MCF 10A (cell line): ENCODE measurements at regions of chr22 and their contacts with region 1.

Region 1: GRCh38 chr22:37199103-37199759 is 11.2 kb upstream of the C1QTNF6 start:
- DNase-seq: peak; percentile 97
- H3K4me3 Mint-ChIP-seq: peak overlapping the region; percentile 81
- H3K27ac Mint-ChIP-seq: peak overlapping the region; percentile 35
- H3K4me1 Mint-ChIP-seq: peaks cover 25% of the 10 kb centered on the region
- H3K27me3 Mint-ChIP-seq: no peaks in the 10 kb centered on the region
- CTCF ChIP-seq: peak; percentile 87

Region 2: GRCh38 chr22:36409911-36410756 is 789.1 kb before region 1 on chr22:
- CTCF ChIA-PET with region 1: no interaction called
- POLR2A ChIA-PET with region 1: no interaction called
- intact Hi-C with region 1: no loop called
- DNase-seq: peak; percentile 97
- H3K4me3 Mint-ChIP-seq: peak overlapping the region; percentile 78
- H3K27ac Mint-ChIP-seq: peak overlapping the region; percentile 85
- H3K4me1 Mint-ChIP-seq: peaks cover 26% of the 10 kb centered on the region
- H3K27me3 Mint-ChIP-seq: no peaks in the 10 kb centered on the region
- CTCF ChIP-seq: no peak

Region 3: DNA sequence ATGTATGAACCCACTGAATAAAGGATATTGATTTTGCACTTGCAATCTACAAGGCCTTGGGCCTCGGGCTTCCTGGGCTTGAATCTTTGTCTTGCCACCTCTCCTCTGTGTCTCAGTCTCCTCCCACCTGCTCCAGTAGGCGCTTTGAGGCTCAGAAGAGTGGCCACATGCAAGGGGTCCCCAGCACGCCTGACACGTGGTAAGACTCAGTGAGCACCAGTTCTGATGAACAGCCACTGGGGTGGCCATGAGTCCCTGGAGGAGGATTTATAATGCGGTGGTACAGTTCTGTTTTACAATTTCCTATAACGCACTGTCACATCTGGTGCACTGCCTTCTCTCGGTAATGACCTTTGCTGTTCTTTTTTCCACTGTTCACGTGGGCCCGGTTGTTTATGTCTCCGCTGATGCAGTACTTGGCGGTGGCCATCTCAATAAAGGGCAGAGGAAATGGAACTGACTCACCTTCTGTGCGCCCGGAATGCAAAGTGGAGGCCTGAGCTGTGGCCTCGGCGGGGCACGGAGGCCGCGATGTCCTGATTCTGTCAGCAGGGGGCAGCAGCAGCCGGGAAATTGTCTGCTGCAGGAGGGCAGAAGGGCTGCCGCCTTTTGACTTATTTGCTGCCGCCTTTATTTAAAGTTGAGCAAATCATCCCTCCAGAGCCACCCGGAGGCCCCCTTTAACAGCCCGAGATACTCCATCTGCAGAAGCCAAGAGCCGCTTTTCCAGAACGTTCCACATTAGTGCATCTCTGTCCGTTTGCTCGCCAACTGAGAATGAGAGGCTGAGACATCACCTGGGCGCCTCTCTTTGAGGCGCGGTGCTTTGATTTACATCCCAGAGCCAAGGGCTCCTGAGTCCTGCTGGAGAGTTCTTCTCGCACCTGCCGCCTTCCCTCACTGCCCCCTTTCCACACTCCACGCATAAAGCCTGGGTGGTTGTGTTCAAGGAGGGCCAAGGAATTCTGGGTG is 417.3 kb before region 1 on chr22:
- CTCF ChIA-PET with region 1: interaction called, 4 read pairs
- POLR2A ChIA-PET with region 1: interaction called, 3 read pairs
- intact Hi-C with region 1: loop called (anchors 5 kb)
- DNase-seq: peak; percentile 86
- H3K4me3 Mint-ChIP-seq: no peak overlapping the region
- H3K27ac Mint-ChIP-seq: no peak overlapping the region
- H3K4me1 Mint-ChIP-seq: peaks cover 8% of the 10 kb centered on the region
- H3K27me3 Mint-ChIP-seq: peaks cover 32% of the 10 kb centered on the region
- CTCF ChIP-seq: peak; percentile 84

Region 4: DNA sequence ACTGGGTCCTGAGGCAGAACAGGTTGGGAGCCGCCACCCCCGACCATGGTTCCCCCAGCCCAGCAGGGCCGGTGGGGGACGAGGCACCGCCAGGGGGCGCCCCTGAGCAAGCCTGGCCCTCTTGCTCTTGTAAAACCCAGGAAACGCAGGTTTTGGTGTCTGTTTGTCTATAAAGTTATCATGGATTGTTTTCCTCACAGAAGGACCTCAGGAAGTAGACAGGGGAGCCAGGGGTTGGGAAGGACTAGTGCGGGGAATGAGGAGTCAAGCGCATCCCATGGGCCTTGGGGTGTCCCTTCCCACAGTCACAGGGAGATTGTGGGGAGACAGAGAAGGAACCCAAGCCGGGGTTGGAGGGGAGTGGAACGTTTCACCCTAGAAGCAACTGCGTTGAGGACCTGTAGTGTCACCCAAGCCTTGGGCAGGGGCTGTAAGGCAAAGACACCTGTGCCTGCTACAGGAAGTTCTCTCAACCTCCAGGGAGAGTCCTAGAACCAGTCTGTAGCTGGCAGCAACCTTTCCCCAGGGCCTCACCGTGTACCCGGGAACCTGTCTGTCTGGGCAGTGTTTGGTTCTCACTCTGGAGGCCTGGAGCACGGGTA is 121.2 kb before region 1 on chr22:
- CTCF ChIA-PET with region 1: interaction called, 4 read pairs
- POLR2A ChIA-PET with region 1: no interaction called
- intact Hi-C with region 1: loop called (anchors 1 kb)
- DNase-seq: peak; percentile 55
- H3K4me3 Mint-ChIP-seq: no peak overlapping the region
- H3K27ac Mint-ChIP-seq: no peak overlapping the region
- H3K4me1 Mint-ChIP-seq: no peaks in the 10 kb centered on the region
- H3K27me3 Mint-ChIP-seq: peaks cover 41% of the 10 kb centered on the region
- CTCF ChIP-seq: peak; percentile 98

Region 5: DNA sequence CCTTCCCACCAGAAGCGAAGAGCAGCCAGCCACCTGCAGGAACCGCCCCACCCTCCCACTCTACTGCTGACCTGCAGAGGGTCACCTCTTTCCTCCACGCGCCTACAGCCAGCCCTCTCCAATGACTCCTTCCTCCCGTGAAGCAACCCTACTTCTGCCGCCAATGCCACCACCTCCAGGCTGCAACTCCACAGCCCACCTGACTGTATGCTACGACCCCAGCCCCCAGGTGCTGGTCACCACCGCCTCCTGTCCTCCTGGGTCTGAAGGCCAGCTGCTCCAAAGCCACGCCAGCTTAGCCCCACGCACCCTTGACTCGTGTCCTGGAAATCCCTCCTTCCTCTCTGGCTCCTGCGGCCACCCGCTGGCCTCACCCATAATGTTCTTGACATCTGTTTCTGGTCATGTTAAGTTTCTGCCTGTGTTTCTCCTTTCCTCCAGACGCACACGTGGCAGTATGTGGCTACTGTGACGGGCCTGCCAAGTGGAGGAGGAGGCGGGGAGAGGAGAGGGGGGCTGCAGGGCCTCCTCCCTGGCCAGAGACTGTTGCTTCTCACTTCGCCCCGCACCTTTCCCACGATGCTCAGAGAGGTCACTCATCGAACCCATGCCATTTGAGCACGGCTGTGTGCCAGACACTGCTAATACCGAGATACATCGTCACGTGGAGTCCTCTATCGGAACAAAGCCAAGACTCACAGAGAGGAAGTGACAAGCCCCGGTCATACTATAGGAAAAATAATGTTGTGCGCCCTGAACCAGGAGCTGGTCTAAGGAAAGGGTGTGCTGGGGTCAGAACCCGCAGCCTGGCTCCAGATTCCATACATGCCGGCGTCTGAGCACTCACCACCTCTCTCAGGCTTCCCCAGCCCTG is 22.8 kb before region 1 on chr22:
- CTCF ChIA-PET with region 1: interaction called, 23 read pairs
- POLR2A ChIA-PET with region 1: interaction called, 11 read pairs
- intact Hi-C with region 1: no loop called
- DNase-seq: peak; percentile 71
- H3K4me3 Mint-ChIP-seq: peak overlapping the region; percentile 61
- H3K27ac Mint-ChIP-seq: peak overlapping the region; percentile 80
- H3K4me1 Mint-ChIP-seq: peaks cover 50% of the 10 kb centered on the region
- H3K27me3 Mint-ChIP-seq: peaks cover 3% of the 10 kb centered on the region
- CTCF ChIP-seq: no peak

Region 6: GRCh38 chr22:37215890-37216289 is 16.7 kb after region 1 on chr22:
- CTCF ChIA-PET with region 1: interaction called, 14 read pairs
- POLR2A ChIA-PET with region 1: interaction called, 4 read pairs
- intact Hi-C with region 1: no loop called
- DNase-seq: no peak
- H3K4me3 Mint-ChIP-seq: no peak overlapping the region
- H3K27ac Mint-ChIP-seq: no peak overlapping the region
- H3K4me1 Mint-ChIP-seq: peaks cover 7% of the 10 kb centered on the region
- H3K27me3 Mint-ChIP-seq: peaks cover 36% of the 10 kb centered on the region
- CTCF ChIP-seq: no peak

Region 7: DNA sequence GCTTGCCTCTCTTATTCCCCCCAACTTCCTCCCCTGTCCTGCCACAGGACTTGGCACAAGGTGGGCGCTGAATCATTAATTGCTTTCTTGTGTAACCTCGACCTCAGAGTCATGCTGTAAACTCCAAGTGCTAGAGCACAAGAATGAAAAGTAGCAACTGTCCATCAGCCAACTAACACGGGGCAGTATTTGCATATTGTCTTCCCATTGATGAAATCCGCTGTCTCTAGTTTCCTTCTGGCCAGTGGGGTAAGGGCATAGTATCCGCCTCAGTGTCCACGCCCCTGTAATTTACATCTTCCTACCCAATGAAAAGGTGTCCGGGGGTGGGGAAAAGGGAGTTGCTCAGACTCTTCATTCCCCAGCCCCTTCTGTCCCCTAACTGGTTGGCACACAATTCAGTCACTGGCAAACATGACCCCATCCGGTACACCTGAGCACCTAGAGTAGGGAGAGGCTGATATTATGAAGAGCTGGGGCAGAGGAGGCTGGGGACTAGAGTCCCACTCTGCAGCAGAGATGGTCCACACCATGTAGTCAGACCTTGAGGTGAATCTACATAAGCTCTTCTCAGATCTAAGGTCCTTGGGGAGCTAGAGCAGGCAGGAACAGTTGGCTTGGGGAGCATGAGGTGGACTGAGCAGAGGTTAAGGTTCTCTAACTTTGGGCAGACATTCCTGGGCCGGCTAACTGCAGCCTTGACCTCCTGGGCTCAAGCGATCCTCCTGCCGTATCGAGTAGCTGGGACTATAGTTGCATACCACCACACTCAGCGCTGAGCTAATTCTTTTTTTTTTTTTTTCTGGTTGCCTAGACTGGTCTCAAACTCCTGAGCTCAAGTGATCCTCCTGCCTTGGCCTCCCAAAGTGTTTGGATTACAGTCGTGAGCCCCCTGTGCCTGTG is 402.6 kb after region 1 on chr22:
- CTCF ChIA-PET with region 1: no interaction called
- POLR2A ChIA-PET with region 1: no interaction called
- intact Hi-C with region 1: no loop called
- DNase-seq: peak; percentile 95
- H3K4me3 Mint-ChIP-seq: peak overlapping the region; percentile 38
- H3K27ac Mint-ChIP-seq: peak overlapping the region; percentile 68
- H3K4me1 Mint-ChIP-seq: peaks cover 8% of the 10 kb centered on the region
- H3K27me3 Mint-ChIP-seq: no peaks in the 10 kb centered on the region
- CTCF ChIP-seq: no peak